ENCODE measurements at regions of chr2 and their contacts with region 1.

Region 1: DNA sequence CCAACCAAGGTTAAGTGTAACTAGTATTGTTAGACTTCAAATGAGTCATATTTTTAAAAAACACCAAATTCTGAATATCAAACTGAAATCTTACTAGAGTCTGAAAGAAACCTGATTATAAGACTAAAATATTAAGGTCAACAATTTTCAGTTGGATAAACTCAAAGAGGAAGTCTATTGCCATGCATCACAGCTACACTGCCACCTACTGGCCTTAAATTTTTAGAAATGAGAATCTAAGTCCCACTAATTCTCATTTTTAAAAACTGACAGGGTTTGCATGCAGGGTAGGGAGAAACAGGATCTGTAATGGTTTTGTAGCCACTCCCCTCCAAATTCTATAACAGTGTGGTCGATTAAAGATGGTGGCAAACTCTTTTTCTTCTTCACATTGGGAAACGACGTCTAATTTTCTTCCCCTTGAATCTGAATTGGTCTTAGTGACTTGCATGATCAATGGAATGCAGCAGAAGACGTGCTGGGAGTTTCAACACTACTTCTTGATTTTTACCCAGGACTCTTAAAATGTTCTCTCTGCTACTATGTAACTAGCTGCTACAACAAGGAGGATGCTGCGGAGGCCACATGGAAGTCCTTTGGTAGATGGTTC is 176.1 kb upstream of the SESTD1 start:
- DNase-seq: peak; percentile 65
- H3K4me3 Mint-ChIP-seq: no peak overlapping the region
- H3K27ac Mint-ChIP-seq: no peak overlapping the region
- H3K4me1 Mint-ChIP-seq: no peaks in the 10 kb centered on the region
- H3K27me3 Mint-ChIP-seq: peaks cover 12% of the 10 kb centered on the region

Region 2: DNA sequence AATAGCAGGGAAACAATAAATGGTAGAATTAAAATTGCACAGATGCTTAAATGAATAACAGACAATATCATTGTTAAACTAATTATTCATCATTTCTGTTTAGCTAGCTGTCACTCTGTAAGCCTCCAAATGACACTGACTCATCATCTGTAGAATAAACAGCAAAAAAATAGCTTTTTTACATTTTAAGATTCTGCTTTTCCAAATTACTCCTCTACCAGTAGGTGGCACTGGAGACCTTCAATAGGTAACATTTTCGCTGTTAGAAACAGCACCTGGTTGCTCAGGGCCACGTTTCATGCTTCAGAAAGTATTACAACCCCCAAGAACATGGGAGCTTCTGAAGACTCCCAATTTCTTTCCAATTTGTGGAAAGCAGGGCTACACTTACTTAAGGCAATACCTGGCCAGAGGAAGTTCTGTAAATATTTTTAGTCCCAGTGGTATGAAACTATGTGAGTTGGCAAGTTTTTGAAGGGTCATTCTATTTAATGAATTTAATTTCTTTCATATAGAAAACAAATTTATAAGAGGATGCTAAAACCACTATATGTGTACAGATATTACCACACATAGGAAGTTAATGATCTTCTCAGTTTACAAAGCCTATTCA is 678.9 kb before region 1 on chr2:
- intact Hi-C with region 1: loop called (anchors 10 kb)
- DNase-seq: peak; percentile 82
- H3K4me3 Mint-ChIP-seq: no peak overlapping the region
- H3K27ac Mint-ChIP-seq: no peak overlapping the region
- H3K4me1 Mint-ChIP-seq: no peaks in the 10 kb centered on the region
- H3K27me3 Mint-ChIP-seq: no peaks in the 10 kb centered on the region

Region 3: GRCh38 chr2:178796079-178796677 is 644.6 kb before region 1 on chr2:
- intact Hi-C with region 1: loop called (anchors 2 kb)
- DNase-seq: no peak
- H3K4me3 Mint-ChIP-seq: no peak overlapping the region
- H3K27ac Mint-ChIP-seq: no peak overlapping the region
- H3K4me1 Mint-ChIP-seq: no peaks in the 10 kb centered on the region
- H3K27me3 Mint-ChIP-seq: no peaks in the 10 kb centered on the region

Region 4: DNA sequence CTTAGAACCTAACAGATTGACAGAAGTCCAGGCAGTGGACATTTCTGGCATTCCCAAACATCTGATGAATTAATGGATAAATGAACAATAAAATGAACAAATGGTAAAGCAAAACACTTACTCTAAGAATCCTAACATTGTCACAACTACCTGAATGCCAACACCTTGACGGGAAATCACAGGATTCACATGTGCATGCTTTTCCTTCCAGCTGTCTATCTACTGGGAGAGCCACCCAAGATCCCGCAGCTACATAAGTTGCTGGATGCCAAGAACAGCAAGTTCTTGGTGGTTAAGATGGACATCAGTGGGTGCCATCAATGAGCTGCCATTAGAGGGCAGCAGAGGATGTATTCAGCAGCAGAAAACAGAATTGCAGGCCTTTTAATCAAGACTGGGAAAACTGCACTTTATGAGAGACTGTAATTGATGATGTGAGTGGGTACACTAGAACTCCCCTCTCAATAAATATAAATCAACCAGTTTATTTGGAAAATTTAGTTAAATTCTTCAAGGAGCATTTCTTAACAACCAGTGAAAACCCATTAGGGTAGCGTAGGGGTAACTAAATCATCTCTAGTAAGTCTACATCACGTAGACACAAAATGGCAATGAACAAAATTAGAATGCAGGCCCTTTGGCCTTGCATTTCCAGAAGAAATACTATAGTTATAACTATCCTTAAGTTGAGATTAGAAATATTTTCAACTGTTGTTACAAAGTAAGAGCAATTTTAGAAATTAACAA is 221.7 kb before region 1 on chr2:
- intact Hi-C with region 1: loop called (anchors 1 kb)
- DNase-seq: peak; percentile 85
- H3K4me3 Mint-ChIP-seq: no peak overlapping the region
- H3K27ac Mint-ChIP-seq: no peak overlapping the region
- H3K4me1 Mint-ChIP-seq: no peaks in the 10 kb centered on the region
- H3K27me3 Mint-ChIP-seq: peaks cover 2% of the 10 kb centered on the region

Region 5: DNA sequence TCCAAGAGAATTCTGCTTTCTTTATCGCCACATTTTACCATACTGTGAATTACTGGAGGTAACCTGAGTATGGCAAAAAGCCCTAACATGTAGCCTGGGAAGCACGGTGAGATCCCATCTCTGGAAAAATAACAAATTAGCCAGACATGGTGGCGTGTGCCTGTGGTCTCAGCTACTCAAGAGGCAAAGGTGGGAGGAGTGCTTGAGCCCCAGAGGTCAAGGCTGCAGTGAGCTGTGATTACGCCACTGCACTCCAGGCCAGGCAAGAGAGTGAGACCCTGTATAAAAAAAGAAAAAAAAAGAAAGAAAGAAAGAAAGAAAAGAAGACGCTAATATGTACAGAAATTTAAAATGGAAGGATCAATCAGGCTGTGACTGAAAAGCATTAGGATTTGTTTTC is 118.5 kb before region 1 on chr2:
- intact Hi-C with region 1: no loop called
- DNase-seq: no peak
- H3K4me3 Mint-ChIP-seq: no peak overlapping the region
- H3K27ac Mint-ChIP-seq: no peak overlapping the region
- H3K4me1 Mint-ChIP-seq: no peaks in the 10 kb centered on the region
- H3K27me3 Mint-ChIP-seq: peaks cover 7% of the 10 kb centered on the region

Region 6: GRCh38 chr2:179460181-179460929 is 19.6 kb after region 1 on chr2:
- intact Hi-C with region 1: no loop called
- DNase-seq: no peak
- H3K4me3 Mint-ChIP-seq: no peak overlapping the region
- H3K27ac Mint-ChIP-seq: no peak overlapping the region
- H3K4me1 Mint-ChIP-seq: no peaks in the 10 kb centered on the region
- H3K27me3 Mint-ChIP-seq: no peaks in the 10 kb centered on the region

Measured in activated CD4-positive, alpha-beta T cell treated with anti-CD3 and anti-CD28 coated beads, Interleukin-2, amount 10 ng/mL, durations not matched to agents 24 days and 14 days (primary cell).